ENCODE measurements at regions of chr1 and their contacts with region 1.

Region 1: DNA sequence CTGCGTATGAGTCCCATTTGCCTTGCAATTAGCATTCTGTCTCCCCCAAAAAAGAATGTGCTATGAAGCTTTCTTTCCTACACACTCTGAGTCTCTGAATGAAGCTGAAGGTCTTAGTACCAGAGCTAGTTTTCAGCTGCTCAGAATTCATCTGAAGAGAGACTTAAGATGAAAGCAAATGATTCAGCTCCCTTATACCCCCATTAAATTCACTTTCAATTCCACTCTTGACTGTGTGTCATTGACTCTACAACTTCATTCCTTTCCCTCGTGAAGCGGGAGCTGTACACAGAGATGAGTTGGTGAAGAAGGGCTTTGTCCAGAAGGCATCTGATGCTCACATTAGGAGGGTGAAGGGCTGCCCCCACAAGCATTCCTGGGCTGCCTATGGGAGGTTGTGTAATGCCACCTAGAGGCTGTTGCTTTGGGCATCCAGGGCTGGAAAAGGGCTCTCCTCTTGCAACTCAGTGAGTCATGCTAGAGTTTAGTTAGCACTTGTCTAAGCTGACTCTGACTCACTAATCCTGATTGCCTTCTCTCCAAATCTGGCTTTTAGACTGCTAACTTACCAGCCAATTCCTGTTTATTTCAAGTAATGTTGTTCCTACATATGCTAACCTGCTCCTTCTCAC is 1.8 kb downstream of the SPRR1B start:
- DNase-seq: peak; percentile 80
- H3K4me3 Mint-ChIP-seq: no peak overlapping the region
- H3K27ac Mint-ChIP-seq: peak overlapping the region; percentile 53
- H3K4me1 Mint-ChIP-seq: peaks cover 25% of the 10 kb centered on the region
- H3K27me3 Mint-ChIP-seq: no peaks in the 10 kb centered on the region
- CTCF ChIP-seq: peak; percentile 67

Region 2: DNA sequence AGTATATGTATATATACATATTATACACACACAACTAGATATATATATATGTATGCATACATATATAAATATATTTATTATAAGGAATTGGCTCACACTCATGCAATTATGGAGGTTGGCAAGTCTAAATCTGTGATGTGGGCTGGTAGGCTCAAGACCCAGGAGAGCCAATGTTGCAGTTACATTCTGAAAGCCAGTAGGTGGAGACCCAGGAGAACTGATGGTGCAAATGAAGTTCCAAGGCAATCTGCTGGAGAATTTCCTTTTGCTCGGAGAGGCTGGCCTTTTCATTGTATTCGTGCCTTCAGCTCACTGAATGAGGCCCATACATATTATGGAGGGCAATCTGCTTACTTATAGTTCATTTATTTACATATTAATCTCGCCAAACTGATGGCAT is 115.0 kb before region 1 on chr1:
- CTCF ChIA-PET with region 1: interaction called, 13 read pairs
- intact Hi-C with region 1: loop called (anchors 1 kb)
- DNase-seq: peak; percentile 57
- H3K4me3 Mint-ChIP-seq: no peak overlapping the region
- H3K27ac Mint-ChIP-seq: no peak overlapping the region
- H3K4me1 Mint-ChIP-seq: peaks cover 9% of the 10 kb centered on the region
- H3K27me3 Mint-ChIP-seq: no peaks in the 10 kb centered on the region
- CTCF ChIP-seq: peak; percentile 85

Region 3: GRCh38 chr1:152996633-152997400 is 36.0 kb before region 1 on chr1:
- CTCF ChIA-PET with region 1: interaction called, 14 read pairs
- intact Hi-C with region 1: loop called (anchors 5 kb)
- DNase-seq: peak; percentile 35
- H3K4me3 Mint-ChIP-seq: no peak overlapping the region
- H3K27ac Mint-ChIP-seq: peak overlapping the region; percentile 52
- H3K4me1 Mint-ChIP-seq: peaks cover 53% of the 10 kb centered on the region
- H3K27me3 Mint-ChIP-seq: no peaks in the 10 kb centered on the region
- CTCF ChIP-seq: no peak

Measured in Calu3 (cell line).